ENCODE measurements at regions of chr10 and their contacts with region 1.

Region 1: DNA sequence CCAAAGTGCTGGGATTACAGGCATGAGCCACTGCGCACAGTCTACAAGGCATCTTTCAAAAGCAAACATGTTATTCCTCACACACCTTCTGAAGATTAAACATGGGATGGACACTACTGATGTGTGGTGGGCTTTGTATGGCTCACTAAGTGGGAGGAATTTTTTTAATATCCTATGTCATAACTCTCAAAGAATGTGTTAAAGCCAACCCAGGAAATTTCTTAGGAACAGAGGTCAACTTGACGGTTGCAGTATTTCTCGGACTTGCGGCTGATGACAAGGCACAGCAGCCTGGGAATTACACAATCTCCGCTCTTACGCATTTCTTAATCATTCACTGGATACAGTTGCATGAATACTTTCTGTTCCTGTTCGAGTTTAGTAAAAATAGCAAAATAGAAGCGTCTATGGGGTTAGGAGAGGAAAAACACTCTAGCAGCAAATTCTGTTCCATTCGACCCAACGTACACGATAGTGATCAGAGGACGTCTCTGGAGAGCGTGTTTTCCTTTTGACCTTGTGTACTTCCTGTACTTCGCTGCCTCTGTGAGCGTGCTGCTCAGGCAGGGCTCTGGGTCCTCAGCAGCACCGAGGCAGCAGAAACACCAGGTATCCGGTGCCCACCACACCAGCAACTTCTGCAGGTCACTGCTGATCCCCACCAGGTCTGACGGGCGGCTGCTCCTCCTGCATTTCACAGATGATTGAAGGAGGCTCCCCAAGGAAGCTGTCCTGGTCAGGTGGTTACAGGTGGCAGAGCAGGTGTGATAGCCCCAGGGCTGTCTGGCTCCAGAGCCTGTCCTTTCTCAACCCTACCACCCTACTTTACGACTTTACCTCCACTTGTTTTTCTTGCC is 26.4 kb upstream of the SRGN start:
- DNase-seq: peak; percentile 66 to 76
- H3K4me3 ChIP-seq: peak overlapping the region; percentile 39
- H3K4me3 Mint-ChIP-seq: peak overlapping the region; percentile 71
- H3K27ac Mint-ChIP-seq: peak overlapping the region; percentile 34
- H3K4me1 ChIP-seq: peaks cover 6% of the 10 kb centered on the region; the same call in 1 of the 2 replicates
- H3K4me1 Mint-ChIP-seq: no peaks in the 10 kb centered on the region
- H3K27me3 ChIP-seq: no peaks in the 10 kb centered on the region
- H3K27me3 Mint-ChIP-seq: peaks cover 5% of the 10 kb centered on the region
- CTCF ChIP-seq: no peak

Region 2: GRCh38 chr10:68296843-68297663 is 764.5 kb before region 1 on chr10:
- CTCF ChIA-PET with region 1: no interaction called
- POLR2A ChIA-PET with region 1: no interaction called
- intact Hi-C with region 1: no loop called
- DNase-seq: no peak
- H3K4me3 ChIP-seq: no peak overlapping the region
- H3K4me3 Mint-ChIP-seq: no peak overlapping the region
- H3K27ac Mint-ChIP-seq: no peak overlapping the region
- H3K4me1 ChIP-seq: peaks cover 4% of the 10 kb centered on the region
- H3K4me1 Mint-ChIP-seq: peaks cover 6% of the 10 kb centered on the region
- H3K27me3 ChIP-seq: no peaks in the 10 kb centered on the region
- H3K27me3 Mint-ChIP-seq: no peaks in the 10 kb centered on the region
- CTCF ChIP-seq: no peak

Region 3: GRCh38 chr10:68988530-68989316 is 72.8 kb before region 1 on chr10 and contains the start of gene KIFBP:
- CTCF ChIA-PET with region 1: no interaction called
- POLR2A ChIA-PET with region 1: no interaction called
- intact Hi-C with region 1: loop called (anchors 1 kb)
- DNase-seq: peak; percentile 99
- H3K4me3 ChIP-seq: peak within 1 kb of the TSS; percentile 76
- H3K4me3 Mint-ChIP-seq: peak within 1 kb of the TSS; percentile 81
- H3K27ac Mint-ChIP-seq: peak within 1 kb of the TSS; percentile 90
- H3K4me1 ChIP-seq: peaks cover 7% of the 10 kb centered on the region; the same call in 1 of the 2 replicates
- H3K4me1 Mint-ChIP-seq: peaks cover 41% of the 10 kb centered on the region
- H3K27me3 ChIP-seq: no peaks in the 10 kb centered on the region
- H3K27me3 Mint-ChIP-seq: no peaks in the 10 kb centered on the region
- CTCF ChIP-seq: peak; percentile 67 to 86
- total RNA-seq, gene KIFBP: 57.6 and 58.9 TPM in 2 replicates

Measured in Caco-2 (cell line).